Aorta (tissue), 5 donors: ENCODE measurements at regions of chr17 and their contacts with region 1.

Region 1: DNA sequence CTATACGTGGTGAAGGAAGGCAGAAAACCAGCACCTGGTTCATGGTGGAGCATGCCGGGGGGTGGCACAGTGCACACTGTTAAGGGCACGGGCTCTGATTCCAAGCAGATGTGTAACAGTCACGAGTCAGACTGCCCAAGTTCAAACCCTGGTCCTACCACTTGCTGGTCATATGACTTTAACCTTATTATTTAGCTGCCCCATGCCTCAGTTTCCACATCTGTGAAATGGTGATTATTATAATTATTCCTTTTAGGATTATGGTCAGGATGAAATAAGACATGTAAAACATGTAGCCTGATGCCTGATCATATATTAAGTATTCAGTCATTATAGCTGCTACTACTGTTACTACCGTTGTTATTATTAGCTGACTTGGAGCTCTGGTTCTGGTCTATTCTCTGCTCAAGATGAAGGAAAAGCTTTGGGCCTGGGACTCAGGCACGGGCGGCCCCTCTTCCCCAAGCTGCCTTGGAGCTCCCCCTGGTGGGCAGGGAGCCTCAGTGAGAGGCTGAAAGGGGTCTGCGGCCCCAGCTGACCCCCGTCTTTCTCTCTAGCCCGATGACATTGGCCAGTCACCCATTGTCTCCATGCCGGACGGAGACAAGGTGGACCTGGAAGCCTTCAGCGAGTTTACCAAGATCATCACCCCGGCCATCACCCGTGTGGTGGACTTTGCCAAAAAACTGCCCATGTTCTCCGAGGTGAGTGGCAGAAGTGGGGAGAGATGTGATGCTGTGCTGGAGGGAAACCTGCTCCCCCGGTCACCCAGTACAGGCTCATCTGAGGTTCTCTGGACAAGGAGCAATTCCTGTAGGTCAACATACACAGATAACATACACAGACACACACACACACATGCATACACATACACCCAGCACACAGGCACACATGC is 14.0 kb downstream of the NR1D1 start:
- DNase-seq: peak in 1 of 2 donors; percentile 91
- ATAC-seq: peak; percentile 49
- H3K4me3 ChIP-seq: no peak overlapping the region
- H3K27ac ChIP-seq: no peak overlapping the region
- H3K4me1 ChIP-seq: no peaks in the 10 kb centered on the region
- H3K27me3 ChIP-seq: no peaks in the 10 kb centered on the region

Region 2: GRCh38 chr17:39963829-39964228 is 122.6 kb before region 1 on chr17:
- intact Hi-C with region 1: no loop called
- DNase-seq: no peak
- ATAC-seq: no peak
- H3K4me3 ChIP-seq: no peak overlapping the region
- H3K27ac ChIP-seq: no peak overlapping the region
- H3K4me1 ChIP-seq: no peaks in the 10 kb centered on the region
- H3K27me3 ChIP-seq: no peaks in the 10 kb centered on the region

Region 3: GRCh38 chr17:40019140-40019991 is 67.0 kb before region 1 on chr17:
- intact Hi-C with region 1: loop called in 1 of 2 experiments (anchors 5 kb)
- DNase-seq: peak in 1 of 2 donors; percentile 79
- ATAC-seq: no peak
- H3K4me3 ChIP-seq: no peak overlapping the region
- H3K27ac ChIP-seq: no peak overlapping the region
- H3K4me1 ChIP-seq: no peaks in the 10 kb centered on the region
- H3K27me3 ChIP-seq: no peaks in the 10 kb centered on the region

Region 4: GRCh38 chr17:40032322-40033320 is 53.8 kb before region 1 on chr17:
- intact Hi-C with region 1: loop called in 1 of 2 experiments (anchors 5 kb)
- DNase-seq: peak in 1 of 2 donors; percentile 41
- ATAC-seq: no peak
- H3K4me3 ChIP-seq: no peak overlapping the region
- H3K27ac ChIP-seq: no peak overlapping the region
- H3K4me1 ChIP-seq: no peaks in the 10 kb centered on the region
- H3K27me3 ChIP-seq: no peaks in the 10 kb centered on the region

Region 5: DNA sequence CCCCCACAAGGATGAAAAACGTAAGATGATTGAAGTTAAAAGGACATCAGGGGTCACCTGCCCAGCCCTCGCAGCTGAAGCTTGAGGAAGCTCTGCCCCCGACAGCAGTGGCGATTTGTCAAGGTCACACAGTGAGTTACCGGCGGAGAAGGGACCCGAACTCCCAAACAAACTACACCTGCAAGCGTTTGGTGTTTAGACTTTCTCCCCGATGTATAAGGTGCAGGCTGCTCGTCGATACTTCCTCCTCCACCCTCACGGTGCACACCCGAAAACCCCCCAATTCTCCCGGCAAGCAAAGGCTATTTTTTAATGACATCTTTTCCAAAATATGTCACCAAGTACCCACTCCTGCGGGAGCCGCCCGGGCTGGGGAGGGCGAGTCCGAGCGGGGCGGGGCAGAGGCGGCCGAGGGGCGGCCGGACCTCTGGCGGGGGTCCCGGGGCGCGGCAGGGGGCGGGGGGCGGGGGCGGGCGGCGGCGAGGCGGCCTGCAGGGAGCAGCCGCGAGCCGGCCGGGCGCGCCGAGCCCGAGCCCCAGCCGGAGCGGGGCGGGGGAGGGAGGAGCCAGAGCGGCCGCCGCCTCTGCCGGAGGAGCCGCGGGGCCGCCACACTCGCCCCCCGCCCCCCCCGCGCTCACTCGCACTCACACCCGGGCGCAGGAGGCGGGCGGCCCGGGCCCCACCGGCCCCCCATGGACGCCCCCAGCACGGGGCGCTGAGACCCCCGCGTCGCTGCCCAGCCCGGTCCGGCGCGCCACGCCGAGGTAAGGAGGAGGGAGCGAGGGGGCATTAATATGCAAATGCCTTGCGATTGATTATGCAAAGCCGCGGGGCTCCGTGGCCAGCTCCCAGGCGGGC is 23.8 kb before region 1 on chr17 and contains the start of gene THRA:
- intact Hi-C with region 1: loop called in 1 of 2 experiments (anchors 2 kb)
- DNase-seq: peak; percentile 82 to 91
- ATAC-seq: peak; percentile 66
- H3K4me3 ChIP-seq: peak within 1 kb of the TSS; percentile 89 to 98
- H3K27ac ChIP-seq: peak within 1 kb of the TSS in 1 of 2 donors; percentile 57
- H3K4me1 ChIP-seq: peaks cover 0 to 1% of the 10 kb centered on the region in 2 donors
- H3K27me3 ChIP-seq: no peaks in the 10 kb centered on the region
- total RNA-seq, gene THRA: 53.7 to 62.3 TPM